Dorsolateral prefrontal cortex (tissue), 120 donors: ENCODE measurements at regions of chr11 and their contacts with region 1.

Region 1: DNA sequence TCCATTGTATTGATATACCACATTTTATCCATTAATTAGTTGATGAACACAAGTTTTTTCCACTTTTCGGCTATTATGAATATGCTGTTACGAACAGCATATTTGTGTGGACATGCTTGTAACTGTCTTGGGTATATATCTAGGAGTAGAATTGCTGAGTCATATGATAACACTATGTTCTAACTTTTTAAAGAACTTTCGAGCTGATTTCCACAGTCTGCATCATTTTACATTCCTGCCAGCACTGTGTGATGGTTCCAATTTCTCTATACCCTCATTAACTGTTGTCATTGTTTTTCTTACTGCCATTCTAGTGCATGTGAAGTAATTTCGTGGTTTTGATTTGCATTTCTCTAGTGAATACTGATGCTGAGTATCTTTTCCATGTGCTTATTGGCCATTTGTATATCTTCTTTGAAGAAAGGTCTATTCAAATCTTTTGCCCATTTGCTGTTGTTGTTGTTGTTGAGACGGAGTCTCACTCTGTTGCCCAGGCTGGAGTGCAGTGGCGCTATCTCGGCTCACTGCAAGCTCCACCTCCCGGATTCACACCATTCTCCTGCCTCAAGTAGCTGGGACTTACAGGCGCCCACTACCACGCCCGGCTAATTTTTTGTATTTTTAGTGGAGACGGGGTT is 7.4 kb upstream of the RCE1 start:
- DNase-seq: no peak
- H3K4me3 ChIP-seq: no peak overlapping the region
- H3K27ac ChIP-seq: peak overlapping the region in 18 of 59 donors; percentile 0 to 66 (median 27)
- H3K27me3 ChIP-seq: no peaks in the 10 kb centered on the region
- CTCF ChIP-seq: no peak

Region 2: DNA sequence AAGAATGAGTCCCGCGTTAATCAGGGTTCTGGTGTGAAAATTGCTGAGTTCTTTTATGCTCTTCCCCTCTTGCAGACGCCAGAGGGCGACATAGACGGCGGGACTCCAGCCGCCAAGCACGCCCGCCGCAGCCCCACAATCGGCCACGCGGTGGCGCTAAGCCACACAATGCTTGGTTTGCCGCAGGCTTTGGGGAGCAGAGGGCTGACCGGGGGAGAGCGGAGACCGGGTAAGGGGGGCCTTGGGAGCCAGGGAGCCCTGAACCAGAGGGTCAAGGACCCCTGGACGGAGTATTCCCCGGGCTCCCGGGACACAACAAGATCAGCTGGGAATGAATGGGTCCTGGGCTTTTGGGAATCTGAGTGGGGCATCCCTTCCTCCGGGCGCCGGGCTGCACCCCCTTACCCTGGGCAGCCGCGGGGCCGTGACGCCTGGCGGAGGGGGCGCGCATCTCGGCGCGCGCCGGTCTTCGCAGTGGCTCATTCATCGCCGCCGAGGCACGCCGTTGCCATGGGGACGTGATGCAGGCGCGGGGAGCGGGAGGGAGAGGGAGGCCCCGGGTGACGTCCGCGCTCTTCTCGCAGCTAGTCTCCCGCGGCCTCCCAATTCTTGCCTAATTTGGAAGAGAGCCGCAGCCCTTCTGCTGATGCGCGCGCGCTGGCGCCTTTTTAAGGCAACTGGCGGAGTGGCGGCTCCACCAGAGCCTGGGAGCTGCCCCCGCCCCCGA is 427.2 kb before region 1 on chr11:
- intact Hi-C with region 1: loop called (anchors 5 to 10 kb)
- DNase-seq: peak; percentile 81 to 94 (median 90)
- H3K4me3 ChIP-seq: peak overlapping the region; percentile 38 to 75 (median 58)
- H3K27ac ChIP-seq: peak overlapping the region in 27 of 59 donors; percentile 14 to 90 (median 37)
- H3K27me3 ChIP-seq: peaks cover 0 to 6% (median 0%) of the 10 kb centered on the region in 45 donors
- CTCF ChIP-seq: peak; percentile 98 to 100 (median 100)

Region 3: GRCh38 chr11:66579017-66579606 is 256.8 kb before region 1 on chr11:
- intact Hi-C with region 1: loop called in 1 of 2 experiments (anchors 2 kb)
- DNase-seq: peak; percentile 70 to 86 (median 80)
- H3K4me3 ChIP-seq: peak overlapping the region in 20 of 59 donors; percentile 1 to 39 (median 21)
- H3K27ac ChIP-seq: peak overlapping the region in 8 of 59 donors; percentile 0 to 74 (median 13)
- H3K27me3 ChIP-seq: no peaks in the 10 kb centered on the region
- CTCF ChIP-seq: peak; percentile 46 to 93 (median 84)

Region 4: GRCh38 chr11:66694732-66695207 is 141.1 kb before region 1 on chr11:
- intact Hi-C with region 1: loop called (anchors 1 to 5 kb)
- DNase-seq: peak; percentile 72 to 91 (median 86)
- H3K4me3 ChIP-seq: no peak overlapping the region
- H3K27ac ChIP-seq: peak overlapping the region in 26 of 59 donors; percentile 0 to 80 (median 36)
- H3K27me3 ChIP-seq: no peaks in the 10 kb centered on the region
- CTCF ChIP-seq: peak; percentile 88 to 98 (median 94)

Region 5: GRCh38 chr11:66744485-66745340 is 91.2 kb before region 1 on chr11:
- intact Hi-C with region 1: loop called in 1 of 2 experiments (anchors 2 kb)
- DNase-seq: peak; percentile 64 to 91 (median 78)
- H3K4me3 ChIP-seq: peak overlapping the region; percentile 78 to 100 (median 97)
- H3K27ac ChIP-seq: peak overlapping the region in 55 of 59 donors; percentile 16 to 97 (median 85)
- H3K27me3 ChIP-seq: no peaks in the 10 kb centered on the region
- CTCF ChIP-seq: peak in 22 of 56 donors; percentile 1 to 51 (median 15)

Region 6: DNA sequence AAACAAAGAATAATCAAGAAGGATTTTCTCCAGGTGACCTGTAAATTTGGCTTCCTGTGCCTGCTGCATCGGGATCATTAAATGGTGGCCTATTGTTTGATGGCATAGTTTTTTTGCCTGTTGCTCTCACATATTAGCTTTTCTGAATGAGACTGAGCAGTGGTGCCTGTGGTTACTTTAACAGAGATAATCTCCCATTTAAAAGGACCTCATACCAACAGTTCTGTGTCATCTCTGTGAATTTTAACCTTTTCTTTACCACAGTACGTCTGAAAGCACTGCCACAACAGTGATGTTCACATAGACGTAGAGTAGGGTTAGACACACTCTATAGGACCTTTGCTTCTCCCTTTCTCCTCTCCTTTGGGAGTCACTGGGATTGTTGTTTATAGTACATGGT is 15.5 kb before region 1 on chr11:
- intact Hi-C with region 1: no loop called
- DNase-seq: no peak
- H3K4me3 ChIP-seq: no peak overlapping the region
- H3K27ac ChIP-seq: no peak overlapping the region
- H3K27me3 ChIP-seq: no peaks in the 10 kb centered on the region
- CTCF ChIP-seq: no peak